Uterus (tissue), 4 donors: ENCODE measurements at regions of chr22 and their contacts with region 1.

Region 1: DNA sequence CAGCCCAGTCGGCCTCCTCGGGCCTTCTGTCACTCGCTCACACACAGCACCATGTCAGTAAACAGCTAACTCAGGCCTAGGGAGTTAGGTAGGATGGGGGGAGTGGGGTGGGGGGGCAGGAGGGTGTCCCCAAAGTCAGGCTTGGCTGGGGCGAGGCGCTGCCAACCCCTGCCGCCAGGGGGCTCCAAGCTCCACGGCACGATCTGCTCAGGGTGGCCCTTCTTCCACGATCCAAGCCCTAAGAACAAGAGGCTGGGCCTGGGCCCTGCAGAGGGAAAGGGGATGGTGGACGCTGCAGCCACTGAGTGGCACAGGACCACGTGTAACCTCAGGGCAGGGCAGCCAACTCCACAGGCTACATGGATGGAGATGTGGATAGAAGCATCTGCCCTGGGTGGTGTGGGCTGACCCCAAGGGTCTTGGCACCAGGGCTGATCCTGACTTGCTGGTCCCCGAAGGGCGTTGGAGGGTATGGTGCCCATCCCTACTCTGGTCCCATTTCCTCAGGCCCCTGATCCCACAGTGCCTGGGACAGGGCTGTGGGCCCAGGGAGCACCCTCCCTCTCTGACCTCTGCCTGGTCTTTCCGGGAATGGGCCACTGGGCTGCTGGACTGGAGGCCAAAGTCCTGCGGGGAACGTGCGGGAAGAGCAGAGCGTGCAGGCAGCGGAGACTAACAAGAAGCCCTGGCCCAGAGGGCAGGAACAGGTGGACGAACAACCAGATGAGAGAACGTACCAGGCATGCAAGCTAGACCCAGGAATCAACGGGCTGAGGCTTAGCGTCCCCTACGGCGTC is 29.1 kb upstream of the TXNRD2 start:
- DNase-seq: peak; percentile 52 to 68
- H3K4me3 ChIP-seq: no peak overlapping the region
- H3K27ac ChIP-seq: no peak overlapping the region
- H3K4me1 ChIP-seq: no peaks in the 10 kb centered on the region
- H3K27me3 ChIP-seq: no peaks in the 10 kb centered on the region
- CTCF ChIP-seq: peak; percentile 81 to 94 (median 90)
- POLR2A ChIP-seq: no peak

Region 2: DNA sequence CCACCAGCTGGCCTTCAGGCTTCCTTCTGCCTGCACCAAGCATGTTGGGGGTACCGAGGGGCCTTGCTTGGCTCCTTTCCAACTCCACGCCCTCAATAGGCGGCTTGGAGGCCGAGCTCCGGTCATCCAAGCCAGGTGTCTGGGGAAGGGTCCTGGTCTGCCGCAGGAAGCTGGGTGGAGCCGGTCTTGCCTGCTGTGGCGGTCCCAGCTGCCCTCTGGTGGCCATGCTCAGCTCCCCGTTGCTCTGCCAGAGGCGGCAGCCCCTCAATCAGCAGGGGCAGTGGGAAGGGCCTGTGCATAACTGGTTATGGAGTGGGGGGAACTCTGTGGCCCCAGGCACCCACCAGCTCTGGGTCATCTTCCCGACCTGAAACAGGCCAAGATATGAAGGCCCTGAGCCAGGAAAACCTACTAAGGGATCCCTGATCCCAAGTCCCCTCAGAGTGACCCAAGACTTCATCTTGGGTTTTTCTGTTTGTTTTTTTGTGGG is 42.8 kb after region 1 on chr22:
- intact Hi-C with region 1: loop called (anchors 5 kb)
- DNase-seq: peak; percentile 48 to 60
- H3K4me3 ChIP-seq: no peak overlapping the region
- H3K27ac ChIP-seq: no peak overlapping the region
- H3K4me1 ChIP-seq: peaks cover 0 to 4% of the 10 kb centered on the region in 2 donors
- H3K27me3 ChIP-seq: no peaks in the 10 kb centered on the region
- CTCF ChIP-seq: peak; percentile 63 to 85 (median 76)
- POLR2A ChIP-seq: no peak

Region 3: DNA sequence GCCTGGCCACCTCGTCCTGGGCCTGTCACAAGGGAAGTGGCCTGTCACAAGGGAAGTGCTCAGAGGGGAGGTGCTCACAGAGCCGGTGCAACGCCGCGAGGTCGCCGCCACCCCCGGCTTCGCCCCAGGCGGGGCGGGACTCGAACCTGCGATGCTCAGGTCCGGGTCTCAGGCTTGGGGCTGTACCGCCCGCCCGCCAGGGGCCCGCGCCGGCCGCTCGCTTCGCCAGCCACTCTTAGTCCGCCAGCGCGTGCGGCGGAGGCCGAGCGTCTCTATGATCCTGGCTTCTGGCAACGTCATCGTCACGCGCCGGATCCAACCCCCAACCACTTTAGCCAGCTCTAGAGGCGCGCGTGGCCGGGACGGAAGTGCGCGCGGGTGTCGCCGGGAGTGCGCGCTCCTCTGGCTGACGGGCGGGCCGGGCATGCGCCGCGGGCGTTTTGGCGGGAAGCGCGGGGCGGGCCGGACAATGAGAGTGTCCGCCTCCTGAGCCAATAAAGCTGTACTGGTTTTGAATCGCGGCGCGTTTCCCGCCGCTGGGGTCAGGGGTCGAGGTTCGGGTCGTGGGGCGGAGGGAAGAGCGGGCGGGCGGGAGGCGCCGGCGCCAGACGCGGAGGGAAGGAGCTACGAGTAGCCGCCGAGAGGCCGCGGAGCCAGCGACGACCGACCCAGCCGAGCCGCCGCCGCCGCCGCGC is 146.4 kb after region 1 on chr22 and contains the start of gene TRMT2A:
- intact Hi-C with region 1: loop called (anchors 10 kb)
- DNase-seq: peak; percentile 98 to 99
- H3K4me3 ChIP-seq: peak within 1 kb of the TSS; percentile 51 to 95
- H3K27ac ChIP-seq: peak within 1 kb of the TSS; percentile 75 to 87
- H3K4me1 ChIP-seq: peaks cover 4 to 7% of the 10 kb centered on the region in 2 donors
- H3K27me3 ChIP-seq: no peaks in the 10 kb centered on the region
- CTCF ChIP-seq: peak in 3 of 4 experiments; percentile 9 to 44 (median 22)
- POLR2A ChIP-seq: peak; percentile 58 to 68
- total RNA-seq, gene TRMT2A: 30.9 to 123 (median 45.3) TPM